ENCODE measurements at regions of chr6 and their contacts with region 1.

Region 1: GRCh38 chr6:31652925-31653718 is 661 bp upstream of the BAG6 start:
- H3K4me3 Mint-ChIP-seq: peak overlapping the region; percentile 94
- H3K27ac Mint-ChIP-seq: peak overlapping the region; percentile 97
- H3K4me1 Mint-ChIP-seq: peaks cover 48% of the 10 kb centered on the region
- H3K27me3 Mint-ChIP-seq: no peaks in the 10 kb centered on the region

Region 2: DNA sequence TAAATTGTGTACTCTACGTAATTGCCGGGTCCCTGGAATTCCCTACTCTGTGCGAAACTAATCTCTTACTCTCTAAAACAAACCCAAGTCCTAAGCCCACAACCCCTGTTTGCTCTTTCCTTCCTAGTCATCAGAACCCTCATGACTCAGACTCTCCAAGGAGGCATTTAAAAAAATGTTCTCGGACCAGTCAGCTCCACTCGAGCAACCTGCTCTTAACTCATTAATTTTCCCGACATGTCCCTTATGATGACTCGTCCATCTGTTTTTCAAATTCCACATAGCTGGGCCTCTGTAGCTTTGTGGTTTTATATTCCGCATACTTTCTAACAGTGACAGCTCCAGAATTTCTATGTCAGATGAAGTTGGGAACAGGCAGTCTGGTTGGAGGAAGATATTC is 645.4 kb before region 1 on chr6:
- intact Hi-C with region 1: no loop called
- H3K4me3 Mint-ChIP-seq: no peak overlapping the region
- H3K27ac Mint-ChIP-seq: no peak overlapping the region
- H3K4me1 Mint-ChIP-seq: peaks cover 15% of the 10 kb centered on the region
- H3K27me3 Mint-ChIP-seq: peaks cover 27% of the 10 kb centered on the region

Region 3: DNA sequence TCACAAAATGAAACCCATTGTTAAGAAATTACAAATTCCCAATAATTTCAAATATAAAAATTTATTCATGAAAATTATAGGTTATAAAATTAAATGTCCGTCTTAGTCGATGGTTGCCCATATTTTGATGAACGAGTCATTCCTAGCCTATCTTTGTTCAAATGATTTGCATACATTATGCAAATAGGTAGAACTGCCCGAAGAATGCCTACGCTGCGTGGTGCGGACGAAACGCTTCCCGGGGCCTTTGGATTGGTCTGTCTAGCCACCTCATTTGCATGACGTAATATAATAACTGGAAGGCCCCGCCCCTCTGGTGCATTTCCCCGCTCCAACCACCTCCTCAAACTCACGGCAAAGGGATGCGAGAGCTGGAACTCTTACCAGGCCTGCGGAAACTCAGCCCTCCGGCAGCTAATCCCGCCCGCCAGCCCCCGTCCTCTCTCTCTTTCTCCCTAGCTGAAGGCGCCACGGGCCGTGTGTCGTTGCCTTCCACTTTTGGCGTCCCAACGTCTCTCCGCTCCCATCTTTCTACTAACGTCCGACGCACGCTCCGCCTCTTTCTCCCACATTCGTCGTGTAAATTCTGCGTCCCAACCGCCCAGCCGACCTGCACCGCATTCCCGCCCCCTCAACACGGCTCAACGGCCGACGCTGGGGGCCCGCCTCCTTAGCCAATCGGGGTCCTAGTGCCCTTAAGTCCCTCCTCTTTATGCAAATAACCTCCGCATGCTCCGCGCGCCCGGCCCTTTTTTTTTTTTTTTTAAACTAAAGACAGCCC is 33.1 kb before region 1 on chr6:
- intact Hi-C with region 1: loop called (anchors 1 kb)
- H3K4me3 Mint-ChIP-seq: peak overlapping the region; percentile 93
- H3K27ac Mint-ChIP-seq: peak overlapping the region; percentile 96
- H3K4me1 Mint-ChIP-seq: peaks cover 58% of the 10 kb centered on the region
- H3K27me3 Mint-ChIP-seq: no peaks in the 10 kb centered on the region